ENCODE measurements at regions of chr7 and their contacts with region 1.

Region 1: DNA sequence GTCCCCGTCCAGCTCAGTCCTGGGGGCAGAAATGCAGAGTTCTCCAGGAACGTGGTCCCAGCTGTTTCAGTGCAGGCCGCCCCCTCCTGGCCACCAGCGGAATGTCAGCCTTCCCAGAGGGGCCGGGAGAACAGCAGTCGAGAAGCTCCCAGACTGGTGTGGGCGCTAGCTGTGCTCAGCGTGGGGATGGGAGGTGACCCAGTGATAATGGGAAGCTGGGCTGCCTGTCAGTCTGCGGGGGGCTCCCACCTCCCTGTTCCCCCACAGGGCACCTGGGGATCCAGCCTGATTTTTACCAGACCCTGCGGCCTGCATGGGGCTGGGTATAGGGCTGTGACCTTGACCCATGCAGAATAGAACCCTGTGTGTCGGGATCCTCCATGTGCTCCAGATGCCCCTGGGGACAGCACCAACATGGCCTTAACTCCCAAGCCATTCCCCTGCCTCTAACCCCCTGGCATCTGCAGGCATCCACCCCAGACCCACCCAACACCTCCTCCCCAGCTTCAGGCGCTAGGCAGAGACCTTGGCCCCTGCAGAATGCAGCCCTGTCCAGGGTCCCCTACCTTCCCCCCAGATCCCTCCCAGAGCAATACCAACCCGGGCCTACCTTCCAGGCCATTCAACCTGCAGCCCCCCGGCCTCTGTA is 946 bp upstream of the ELN start:
- DNase-seq: peak; percentile 84
- ATAC-seq: peak; percentile 57 to 62

Region 2: DNA sequence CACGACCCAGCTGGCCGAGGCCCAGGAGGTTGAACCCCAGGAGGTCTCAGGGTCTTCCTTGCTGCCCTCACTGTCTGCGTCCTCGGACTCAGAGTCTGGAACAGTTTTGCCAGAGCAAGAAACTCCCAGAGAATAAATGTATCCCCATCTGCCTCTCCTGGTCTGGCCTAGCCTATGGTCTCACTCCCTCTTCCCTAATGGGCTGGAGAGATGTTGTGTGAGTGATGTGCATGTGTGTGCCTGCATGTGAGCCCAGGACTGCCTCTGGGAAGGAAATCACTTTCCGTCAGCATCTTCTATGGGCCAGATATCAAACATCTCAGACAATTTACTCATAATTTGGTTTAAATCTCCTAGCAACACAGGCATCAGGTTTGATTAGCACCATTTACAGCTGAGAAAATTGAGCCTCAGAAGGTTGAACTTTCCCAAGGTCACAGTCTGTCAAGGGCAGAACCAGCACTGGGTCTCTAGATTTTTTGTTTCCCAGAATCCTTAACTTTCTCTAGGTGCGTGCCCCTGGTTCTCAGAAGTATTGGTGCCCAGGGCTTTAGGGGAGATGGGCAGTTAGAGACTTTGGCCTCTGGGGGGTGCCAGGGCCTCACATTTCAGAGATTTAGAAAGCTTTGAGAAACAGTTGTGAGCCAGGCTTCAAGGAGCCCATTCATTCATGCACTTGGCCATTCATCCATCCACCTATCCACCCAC is 161.1 kb before region 1 on chr7:
- intact Hi-C with region 1: loop called (anchors 5 kb)
- DNase-seq: peak; percentile 67
- ATAC-seq: peak; percentile 64 to 71

Region 3: GRCh38 chr7:73894733-73895551 is 132.1 kb before region 1 on chr7:
- intact Hi-C with region 1: loop called in 1 of 2 experiments (anchors 10 kb)
- DNase-seq: peak; percentile 88
- ATAC-seq: peak; percentile 83 to 86